Caco-2 (cell line): ENCODE measurements at regions of chr15 and their contacts with region 1.

Region 1: DNA sequence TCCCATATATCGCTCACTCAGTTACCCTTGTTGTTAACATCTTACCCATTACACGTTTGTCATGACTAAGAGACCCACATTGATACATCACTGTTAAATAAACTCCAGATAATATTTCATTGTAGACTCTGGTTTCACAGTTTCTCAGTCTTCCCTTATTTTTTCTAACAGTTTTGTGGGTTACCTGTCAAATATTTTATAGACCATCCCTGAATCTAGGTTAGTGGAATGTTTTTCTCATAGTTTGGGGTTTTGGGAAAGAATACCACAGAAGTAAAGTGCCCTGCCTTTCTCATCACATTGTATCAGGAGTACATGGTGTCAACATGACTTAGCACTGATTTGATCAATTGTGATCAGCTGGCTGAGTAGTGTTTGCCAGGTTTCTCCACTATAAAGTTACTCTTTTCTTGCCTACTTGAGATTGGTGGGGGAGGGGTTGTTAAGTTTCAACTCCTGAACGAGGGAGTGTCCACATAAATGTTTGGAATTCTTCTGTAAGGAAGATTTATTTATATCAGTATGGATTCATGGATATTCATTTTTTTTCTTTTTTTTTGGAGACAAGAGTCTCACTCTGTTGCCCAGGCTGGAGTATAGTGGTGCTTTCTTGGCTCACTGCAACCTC is 25.9 kb downstream of the RNF111 start:
- DNase-seq: no peak
- H3K4me3 ChIP-seq: no peak overlapping the region
- H3K4me3 Mint-ChIP-seq: no peak overlapping the region
- H3K27ac Mint-ChIP-seq: no peak overlapping the region
- H3K4me1 ChIP-seq: no peaks in the 10 kb centered on the region
- H3K4me1 Mint-ChIP-seq: no peaks in the 10 kb centered on the region
- H3K27me3 ChIP-seq: no peaks in the 10 kb centered on the region
- H3K27me3 Mint-ChIP-seq: no peaks in the 10 kb centered on the region
- CTCF ChIP-seq: no peak

Region 2: GRCh38 chr15:58677426-58677825 is 335.9 kb before region 1 on chr15:
- CTCF ChIA-PET with region 1: no interaction called
- POLR2A ChIA-PET with region 1: no interaction called
- intact Hi-C with region 1: no loop called
- DNase-seq: no peak
- H3K4me3 ChIP-seq: no peak overlapping the region
- H3K4me3 Mint-ChIP-seq: no peak overlapping the region
- H3K27ac Mint-ChIP-seq: no peak overlapping the region
- H3K4me1 ChIP-seq: no peaks in the 10 kb centered on the region; the same call in 1 of the 2 replicates
- H3K4me1 Mint-ChIP-seq: no peaks in the 10 kb centered on the region
- H3K27me3 ChIP-seq: no peaks in the 10 kb centered on the region
- H3K27me3 Mint-ChIP-seq: no peaks in the 10 kb centered on the region
- CTCF ChIP-seq: no peak

Region 3: GRCh38 chr15:58785355-58785754 is 228.0 kb before region 1 on chr15:
- CTCF ChIA-PET with region 1: no interaction called
- POLR2A ChIA-PET with region 1: interaction called, 10 read pairs
- intact Hi-C with region 1: no loop called
- DNase-seq: no peak
- H3K4me3 ChIP-seq: no peak overlapping the region
- H3K4me3 Mint-ChIP-seq: no peak overlapping the region
- H3K27ac Mint-ChIP-seq: no peak overlapping the region
- H3K4me1 ChIP-seq: no peaks in the 10 kb centered on the region
- H3K4me1 Mint-ChIP-seq: peaks cover 2% of the 10 kb centered on the region
- H3K27me3 ChIP-seq: no peaks in the 10 kb centered on the region
- H3K27me3 Mint-ChIP-seq: no peaks in the 10 kb centered on the region
- CTCF ChIP-seq: no peak